ENCODE measurements at regions of chr4 and their contacts with region 1.

Region 1: DNA sequence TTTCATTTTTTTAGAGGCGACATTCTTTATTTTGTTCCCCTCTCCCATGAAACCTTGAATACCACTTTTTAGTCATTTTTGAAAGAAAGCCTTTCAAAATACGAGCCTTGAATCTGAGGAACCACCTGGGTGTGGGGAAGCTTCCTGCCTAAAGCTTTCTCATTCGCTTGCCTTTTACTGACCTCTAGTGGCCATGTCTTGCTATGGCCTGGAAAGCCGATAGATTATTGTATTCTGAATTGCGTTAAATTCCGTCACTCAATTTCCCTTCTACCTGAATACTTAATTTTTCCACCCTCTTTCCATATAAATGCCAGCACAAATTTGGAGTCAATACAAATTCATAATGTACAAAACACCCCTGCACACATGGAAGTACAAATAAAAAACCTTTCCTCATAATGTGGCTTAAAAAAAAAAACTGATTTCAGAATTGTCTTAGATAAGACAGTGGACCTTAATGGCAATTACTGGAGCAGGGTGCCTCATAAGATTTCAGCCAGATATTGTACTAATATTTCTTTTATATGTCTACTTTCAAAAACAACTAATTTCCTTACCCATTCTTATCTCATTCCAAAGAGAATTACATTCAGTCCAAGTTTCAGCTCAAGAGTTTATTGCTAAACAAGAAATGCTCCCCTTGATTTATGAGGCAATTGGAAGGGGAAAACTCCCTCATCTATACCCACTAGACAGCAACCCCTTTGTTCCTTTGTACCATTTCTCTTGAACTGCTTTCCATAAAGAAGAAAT is 217.9 kb downstream of the CENPC start:
- DNase-seq: peak; percentile 72 to 81 (median 77)
- ATAC-seq: peak; percentile 96
- H3K4me3 ChIP-seq: no peak overlapping the region
- H3K27ac ChIP-seq: no peak overlapping the region
- H3K4me1 ChIP-seq: no peaks in the 10 kb centered on the region
- H3K27me3 ChIP-seq: no peaks in the 10 kb centered on the region
- CTCF ChIP-seq: peak; percentile 69 to 86 (median 76)
- EP300 ChIP-seq: no peak
- POLR2A ChIP-seq: no peak
- RAD21 ChIP-seq: peak; percentile 86 to 88

Region 2: DNA sequence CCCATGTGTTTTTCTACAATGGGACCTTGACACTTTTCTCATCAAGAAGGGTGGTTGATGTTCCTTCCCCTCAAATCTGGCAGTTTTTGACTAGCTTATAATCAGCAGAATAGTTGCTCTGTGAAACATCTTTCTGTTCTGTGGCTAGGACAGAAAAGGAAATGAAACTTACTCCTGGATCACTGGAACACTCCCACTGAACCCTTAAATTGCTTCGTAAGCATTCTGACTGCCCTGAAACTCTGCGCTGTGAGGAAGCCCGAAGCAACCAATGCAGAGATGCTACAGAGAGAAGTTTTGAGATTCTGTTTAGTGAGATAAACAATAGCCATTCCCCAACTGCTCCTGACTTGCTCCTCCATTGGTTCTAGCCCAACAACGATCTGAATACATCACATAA is 384.3 kb before region 1 on chr4:
- CTCF ChIA-PET with region 1: no interaction called
- POLR2A ChIA-PET with region 1: no interaction called
- in situ Hi-C with region 1: no loop called
- intact Hi-C with region 1: no loop called
- DNase-seq: no peak
- ATAC-seq: no peak
- H3K4me3 ChIP-seq: no peak overlapping the region
- H3K27ac ChIP-seq: no peak overlapping the region
- H3K4me1 ChIP-seq: no peaks in the 10 kb centered on the region
- H3K27me3 ChIP-seq: no peaks in the 10 kb centered on the region
- CTCF ChIP-seq: no peak
- EP300 ChIP-seq: no peak
- POLR2A ChIP-seq: no peak
- RAD21 ChIP-seq: no peak

Region 3: GRCh38 chr4:67087897-67088296 is 239.5 kb before region 1 on chr4:
- CTCF ChIA-PET with region 1: interaction called, 4 read pairs
- POLR2A ChIA-PET with region 1: no interaction called
- in situ Hi-C with region 1: no loop called
- intact Hi-C with region 1: loop called (anchors 1 kb)
- DNase-seq: peak; percentile 11 to 57 (median 36)
- ATAC-seq: peak; percentile 50; the same call in 2 of the 3 replicates
- H3K4me3 ChIP-seq: no peak overlapping the region
- H3K27ac ChIP-seq: no peak overlapping the region
- H3K4me1 ChIP-seq: no peaks in the 10 kb centered on the region
- H3K27me3 ChIP-seq: no peaks in the 10 kb centered on the region
- CTCF ChIP-seq: peak; percentile 34 to 57 (median 56); a peak in 5 of 6 replicates
- EP300 ChIP-seq: no peak
- POLR2A ChIP-seq: no peak
- RAD21 ChIP-seq: peak; percentile 67

Region 4: DNA sequence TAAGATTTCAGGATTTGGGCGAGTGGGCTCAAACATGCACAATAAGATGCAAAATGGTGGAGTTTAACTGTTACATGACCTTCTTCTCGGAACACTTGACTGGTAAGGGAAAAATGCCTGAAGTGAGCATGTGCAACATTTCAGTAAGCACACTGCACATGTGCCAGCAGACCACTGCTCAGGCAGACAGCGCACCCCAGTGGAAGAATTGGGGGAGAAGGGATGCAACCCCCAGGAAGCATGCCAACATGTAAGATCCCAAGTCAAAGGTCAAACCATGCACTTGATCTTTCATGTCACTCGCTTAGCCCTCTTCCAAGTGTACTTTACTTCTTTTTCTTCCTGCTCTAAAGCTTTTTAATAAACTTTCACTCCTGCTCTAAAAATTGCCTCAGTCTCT is 38.5 kb before region 1 on chr4:
- CTCF ChIA-PET with region 1: no interaction called
- POLR2A ChIA-PET with region 1: no interaction called
- in situ Hi-C with region 1: no loop called
- intact Hi-C with region 1: loop called (anchors 2 kb)
- DNase-seq: peak; percentile 21 to 54 (median 24)
- ATAC-seq: peak; percentile 89
- H3K4me3 ChIP-seq: no peak overlapping the region
- H3K27ac ChIP-seq: no peak overlapping the region
- H3K4me1 ChIP-seq: no peaks in the 10 kb centered on the region
- H3K27me3 ChIP-seq: no peaks in the 10 kb centered on the region
- CTCF ChIP-seq: peak; percentile 54 to 58 (median 56)
- EP300 ChIP-seq: no peak
- POLR2A ChIP-seq: no peak
- RAD21 ChIP-seq: peak in 1 of 2 experiments; percentile 50; a peak in 2 of 4 replicates

Region 5: GRCh38 chr4:67393699-67394281 is 66.3 kb after region 1 on chr4:
- CTCF ChIA-PET with region 1: no interaction called
- POLR2A ChIA-PET with region 1: no interaction called
- in situ Hi-C with region 1: no loop called
- intact Hi-C with region 1: loop called (anchors 5 kb)
- DNase-seq: peak; percentile 23 to 64 (median 33)
- ATAC-seq: 0 out of 3 replicates have a peak, but pooled peaks have one; percentile 46
- H3K4me3 ChIP-seq: no peak overlapping the region
- H3K27ac ChIP-seq: no peak overlapping the region
- H3K4me1 ChIP-seq: no peaks in the 10 kb centered on the region
- H3K27me3 ChIP-seq: no peaks in the 10 kb centered on the region
- CTCF ChIP-seq: peak; percentile 33 to 59 (median 40); a peak in 4 of 6 replicates
- EP300 ChIP-seq: no peak
- POLR2A ChIP-seq: no peak
- RAD21 ChIP-seq: peak; percentile 44 to 57; a peak in 3 of 4 replicates